Naive thymus-derived CD4-positive, alpha-beta T cell (primary cell): ENCODE measurements at regions of chr10 and their contacts with region 1.

Region 1: GRCh38 chr10:26503911-26504310 is 65.8 kb downstream of the APBB1IP start:
- DNase-seq: peak in 2 of 9 donors; percentile 7 to 34
- ATAC-seq: peak; percentile 38
- H3K4me3 ChIP-seq: no peak overlapping the region
- H3K4me3 Mint-ChIP-seq: no peak overlapping the region
- H3K27ac ChIP-seq: no peak overlapping the region
- H3K27ac Mint-ChIP-seq: peak overlapping the region in 8 of 9 donors; percentile 6 to 86 (median 50)
- H3K4me1 ChIP-seq: no peaks in the 10 kb centered on the region
- H3K4me1 Mint-ChIP-seq: peaks cover 5 to 63% (median 51%) of the 10 kb centered on the region in 7 donors
- H3K27me3 ChIP-seq: no peaks in the 10 kb centered on the region
- H3K27me3 Mint-ChIP-seq: no peaks in the 10 kb centered on the region

Region 2: DNA sequence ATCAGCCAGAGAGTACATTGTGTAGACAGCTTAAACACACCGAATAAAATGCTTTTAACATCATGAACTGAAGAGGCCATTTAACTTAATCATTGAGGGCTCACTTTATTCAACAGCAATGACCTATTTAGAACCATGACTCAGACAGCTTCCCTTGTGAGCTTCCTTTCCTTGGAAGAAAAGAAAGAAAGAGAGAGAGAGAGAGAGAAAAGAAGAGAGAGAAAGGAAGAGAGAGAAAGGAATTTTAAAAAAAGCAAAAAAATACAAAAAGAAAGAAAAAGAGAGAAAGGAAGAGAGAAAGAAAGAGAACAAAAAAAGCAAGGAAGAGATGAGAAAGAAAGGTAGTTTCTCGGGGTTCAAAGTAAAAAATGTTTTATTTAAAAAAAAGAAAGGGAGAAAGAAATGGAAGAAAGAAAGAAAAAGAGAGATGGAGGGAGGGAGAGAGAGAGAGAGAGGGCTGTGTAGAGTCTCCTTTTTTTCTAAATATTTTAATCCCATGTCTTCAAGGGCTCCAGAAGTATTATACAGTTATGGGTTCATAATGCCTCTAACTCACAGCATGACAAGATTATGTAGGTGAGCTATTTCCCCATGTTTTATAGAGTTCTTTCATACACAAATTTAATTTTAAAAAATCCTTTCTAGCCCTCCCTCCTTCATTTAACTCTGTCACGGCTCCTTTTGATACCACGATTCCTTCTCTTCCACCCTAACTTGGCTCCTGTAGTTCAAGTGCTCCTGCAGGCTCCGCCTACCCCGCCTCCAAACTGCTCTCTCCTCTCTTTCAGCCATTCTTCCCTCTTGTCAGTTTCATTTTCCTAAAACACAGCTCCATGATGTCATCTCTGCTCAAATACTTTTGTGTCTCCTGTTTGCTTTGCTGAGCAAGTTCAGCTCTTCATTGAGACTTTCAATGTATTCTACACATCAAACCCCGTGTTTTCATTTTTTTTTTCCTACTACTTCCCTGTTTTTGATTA is 1637.0 kb before region 1 on chr10:
- CTCF ChIA-PET with region 1: no interaction called
- POLR2A ChIA-PET with region 1: no interaction called
- intact Hi-C with region 1: no loop called
- DNase-seq: no peak
- ATAC-seq: no peak
- H3K4me3 ChIP-seq: no peak overlapping the region
- H3K4me3 Mint-ChIP-seq: peak overlapping the region in 2 of 10 donors; percentile 17 to 21
- H3K27ac ChIP-seq: no peak overlapping the region
- H3K27ac Mint-ChIP-seq: peak overlapping the region in 5 of 9 donors; percentile 5 to 62 (median 41)
- H3K4me1 ChIP-seq: no peaks in the 10 kb centered on the region
- H3K4me1 Mint-ChIP-seq: peaks cover 8 to 41% (median 32%) of the 10 kb centered on the region in 7 donors
- H3K27me3 ChIP-seq: no peaks in the 10 kb centered on the region
- H3K27me3 Mint-ChIP-seq: peaks cover 0 to 5% (median 0%) of the 10 kb centered on the region in 5 donors

Region 3: DNA sequence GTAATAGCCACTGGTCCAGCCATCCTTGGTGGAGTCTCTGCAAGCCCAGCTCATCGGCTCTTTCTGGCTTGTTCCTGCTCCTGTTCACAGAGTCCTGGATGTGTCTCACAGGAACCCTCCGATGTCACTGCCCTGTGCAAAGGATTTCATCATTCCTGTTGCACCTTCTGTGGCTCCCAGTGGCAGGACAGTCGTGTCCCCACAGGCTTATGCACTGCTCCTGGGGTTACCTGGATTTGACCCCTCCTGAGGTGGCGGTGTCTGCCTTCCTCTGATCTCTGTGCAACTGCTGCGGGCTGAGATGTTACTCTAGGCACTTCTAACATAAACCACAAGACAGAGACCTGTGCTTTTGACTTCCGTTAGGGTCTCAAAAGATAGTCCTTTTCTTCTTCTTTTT is 35.2 kb before region 1 on chr10:
- CTCF ChIA-PET with region 1: interaction called, 6 read pairs
- POLR2A ChIA-PET with region 1: interaction called, 3 read pairs
- intact Hi-C with region 1: loop called in 1 of 2 experiments (anchors 5 kb)
- DNase-seq: peak in 8 of 9 donors; percentile 20 to 82 (median 76)
- ATAC-seq: peak; percentile 94
- H3K4me3 ChIP-seq: peak overlapping the region; percentile 1
- H3K4me3 Mint-ChIP-seq: peak overlapping the region; percentile 66 to 93 (median 84)
- H3K27ac ChIP-seq: peak overlapping the region; percentile 33
- H3K27ac Mint-ChIP-seq: peak overlapping the region; percentile 83 to 96 (median 91)
- H3K4me1 ChIP-seq: peaks cover 64 to 76% of the 10 kb centered on the region in 2 donors
- H3K4me1 Mint-ChIP-seq: peaks cover 61 to 100% (median 92%) of the 10 kb centered on the region in 7 donors
- H3K27me3 ChIP-seq: no peaks in the 10 kb centered on the region
- H3K27me3 Mint-ChIP-seq: no peaks in the 10 kb centered on the region

Region 4: GRCh38 chr10:26481914-26482550 is 21.9 kb before region 1 on chr10:
- CTCF ChIA-PET with region 1: interaction called, 3 read pairs
- POLR2A ChIA-PET with region 1: interaction called, 10 read pairs
- intact Hi-C with region 1: no loop called
- DNase-seq: peak in 7 of 9 donors; percentile 65 to 90 (median 84)
- ATAC-seq: peak; percentile 91
- H3K4me3 ChIP-seq: peak overlapping the region; percentile 46
- H3K4me3 Mint-ChIP-seq: peak overlapping the region; percentile 68 to 88 (median 76)
- H3K27ac ChIP-seq: peak overlapping the region; percentile 71
- H3K27ac Mint-ChIP-seq: peak overlapping the region; percentile 85 to 97 (median 95)
- H3K4me1 ChIP-seq: peaks cover 81 to 85% of the 10 kb centered on the region in 2 donors
- H3K4me1 Mint-ChIP-seq: peaks cover 60 to 85% (median 79%) of the 10 kb centered on the region in 7 donors
- H3K27me3 ChIP-seq: no peaks in the 10 kb centered on the region
- H3K27me3 Mint-ChIP-seq: no peaks in the 10 kb centered on the region

Region 5: GRCh38 chr10:26540601-26541000 is 36.7 kb after region 1 on chr10:
- CTCF ChIA-PET with region 1: no interaction called
- POLR2A ChIA-PET with region 1: interaction called, 4 read pairs
- intact Hi-C with region 1: loop called in 1 of 2 experiments (anchors 5 kb)
- DNase-seq: peak in 1 of 9 donors; percentile 23
- ATAC-seq: no peak
- H3K4me3 ChIP-seq: no peak overlapping the region
- H3K4me3 Mint-ChIP-seq: no peak overlapping the region
- H3K27ac ChIP-seq: no peak overlapping the region
- H3K27ac Mint-ChIP-seq: peak overlapping the region in 8 of 9 donors; percentile 25 to 86 (median 57)
- H3K4me1 ChIP-seq: no peaks in the 10 kb centered on the region
- H3K4me1 Mint-ChIP-seq: peaks cover 8 to 34% (median 24%) of the 10 kb centered on the region in 7 donors
- H3K27me3 ChIP-seq: no peaks in the 10 kb centered on the region
- H3K27me3 Mint-ChIP-seq: no peaks in the 10 kb centered on the region